Activated naive CD4-positive, alpha-beta T cell treated with anti-CD3 and anti-CD28 coated beads for 36 hours (primary cell): ENCODE measurements at regions of chr3 and their contacts with region 1.

Region 1: GRCh38 chr3:44338010-44338827 is at the start of gene TCAIM:
- DNase-seq: peak; percentile 98
- H3K4me3 Mint-ChIP-seq: peak within 1 kb of the TSS; percentile 99
- H3K27ac Mint-ChIP-seq: peak within 1 kb of the TSS; percentile 98
- H3K4me1 Mint-ChIP-seq: peaks cover 17% of the 10 kb centered on the region
- H3K27me3 Mint-ChIP-seq: no peaks in the 10 kb centered on the region
- total RNA-seq, gene TCAIM: 14.0 to 15.9 TPM

Region 2: DNA sequence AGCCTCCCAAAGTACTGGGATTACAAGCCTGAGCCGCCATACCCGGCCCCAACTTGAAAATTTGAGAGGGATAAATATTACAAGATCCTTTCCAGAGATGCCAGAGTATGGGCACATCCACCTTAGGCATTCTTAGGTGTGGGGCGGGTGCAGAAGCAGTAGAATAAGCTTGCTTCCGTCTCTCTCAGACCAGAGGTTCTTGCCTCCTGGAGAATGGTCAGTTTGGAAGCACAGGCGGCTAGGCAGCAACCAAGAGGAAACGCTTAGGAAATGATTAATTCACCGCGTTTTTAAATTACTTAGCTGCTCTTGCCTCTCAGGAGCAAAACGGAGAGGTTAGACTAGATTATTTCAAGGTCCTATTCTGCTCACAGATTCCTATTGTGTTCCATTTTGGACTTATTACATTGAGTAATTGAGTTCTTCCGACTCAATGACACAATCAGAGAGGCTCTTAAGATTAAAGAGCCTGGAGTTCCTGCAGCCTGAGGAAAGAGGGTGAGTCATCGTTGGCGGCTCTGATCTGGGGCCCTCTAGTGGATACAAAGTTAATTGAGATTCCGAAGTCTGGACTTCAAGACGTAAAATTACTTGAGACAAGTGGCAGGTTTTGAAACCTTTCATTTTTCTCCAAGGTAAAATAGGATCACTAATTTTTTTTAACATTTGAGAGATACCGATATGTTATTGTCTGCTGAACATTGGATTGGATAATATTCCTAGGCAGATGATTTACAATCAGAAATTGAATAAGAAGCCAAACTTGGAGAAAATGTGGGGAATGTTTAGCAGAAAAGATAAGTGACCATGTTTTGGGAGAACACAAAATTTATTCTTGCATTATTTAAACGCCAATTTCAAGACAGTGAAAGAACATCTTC is 102.4 kb before region 1 on chr3:
- CTCF ChIA-PET with region 1: interaction called, 3 read pairs
- intact Hi-C with region 1: loop called (anchors 1 kb)
- DNase-seq: peak; percentile 68
- H3K4me3 Mint-ChIP-seq: no peak overlapping the region
- H3K27ac Mint-ChIP-seq: no peak overlapping the region
- H3K4me1 Mint-ChIP-seq: peaks cover 9% of the 10 kb centered on the region
- H3K27me3 Mint-ChIP-seq: peaks cover 8% of the 10 kb centered on the region

Region 3: DNA sequence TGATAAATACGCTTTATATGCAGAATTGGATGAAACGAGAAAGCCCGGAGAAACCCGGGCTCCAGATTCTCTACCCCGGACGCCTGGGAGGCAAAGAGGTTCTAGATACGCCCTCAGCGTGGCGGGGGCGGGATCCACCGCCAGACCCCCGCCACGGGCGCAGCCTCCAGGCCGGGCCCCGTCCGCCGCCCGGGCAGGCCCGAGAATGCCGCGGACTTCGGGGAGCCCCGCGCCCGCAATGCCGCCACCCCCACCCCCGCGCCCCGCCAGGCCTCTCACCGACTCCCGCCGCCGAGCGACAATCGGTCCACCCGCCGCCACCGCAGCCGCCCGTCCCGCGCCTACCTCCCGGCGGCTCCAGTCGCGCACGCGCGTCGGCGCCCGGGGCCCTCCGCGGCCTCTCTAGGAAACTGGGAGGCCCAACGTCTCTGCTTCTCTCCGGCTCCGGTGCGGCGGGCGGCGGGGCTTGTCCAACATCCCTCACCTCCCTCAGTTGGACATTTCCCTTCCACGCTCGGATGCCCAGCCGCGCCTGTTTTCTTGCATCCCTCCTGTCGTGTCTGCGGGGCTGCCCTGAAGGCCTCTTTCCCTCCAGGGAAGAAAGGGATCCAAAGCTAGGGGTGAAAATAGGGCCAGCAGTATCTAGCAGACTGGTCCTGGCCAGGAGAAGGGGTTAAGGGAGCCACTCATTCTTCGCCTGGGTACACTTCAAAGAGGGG is 139.3 kb after region 1 on chr3 and contains the start of gene ZNF445:
- CTCF ChIA-PET with region 1: no interaction called
- intact Hi-C with region 1: loop called (anchors 1 kb)
- DNase-seq: peak; percentile 79
- H3K4me3 Mint-ChIP-seq: peak within 1 kb of the TSS; percentile 88
- H3K27ac Mint-ChIP-seq: peak within 1 kb of the TSS; percentile 87
- H3K4me1 Mint-ChIP-seq: peaks cover 27% of the 10 kb centered on the region
- H3K27me3 Mint-ChIP-seq: no peaks in the 10 kb centered on the region
- total RNA-seq, gene ZNF445: 19.0 TPM

Region 4: DNA sequence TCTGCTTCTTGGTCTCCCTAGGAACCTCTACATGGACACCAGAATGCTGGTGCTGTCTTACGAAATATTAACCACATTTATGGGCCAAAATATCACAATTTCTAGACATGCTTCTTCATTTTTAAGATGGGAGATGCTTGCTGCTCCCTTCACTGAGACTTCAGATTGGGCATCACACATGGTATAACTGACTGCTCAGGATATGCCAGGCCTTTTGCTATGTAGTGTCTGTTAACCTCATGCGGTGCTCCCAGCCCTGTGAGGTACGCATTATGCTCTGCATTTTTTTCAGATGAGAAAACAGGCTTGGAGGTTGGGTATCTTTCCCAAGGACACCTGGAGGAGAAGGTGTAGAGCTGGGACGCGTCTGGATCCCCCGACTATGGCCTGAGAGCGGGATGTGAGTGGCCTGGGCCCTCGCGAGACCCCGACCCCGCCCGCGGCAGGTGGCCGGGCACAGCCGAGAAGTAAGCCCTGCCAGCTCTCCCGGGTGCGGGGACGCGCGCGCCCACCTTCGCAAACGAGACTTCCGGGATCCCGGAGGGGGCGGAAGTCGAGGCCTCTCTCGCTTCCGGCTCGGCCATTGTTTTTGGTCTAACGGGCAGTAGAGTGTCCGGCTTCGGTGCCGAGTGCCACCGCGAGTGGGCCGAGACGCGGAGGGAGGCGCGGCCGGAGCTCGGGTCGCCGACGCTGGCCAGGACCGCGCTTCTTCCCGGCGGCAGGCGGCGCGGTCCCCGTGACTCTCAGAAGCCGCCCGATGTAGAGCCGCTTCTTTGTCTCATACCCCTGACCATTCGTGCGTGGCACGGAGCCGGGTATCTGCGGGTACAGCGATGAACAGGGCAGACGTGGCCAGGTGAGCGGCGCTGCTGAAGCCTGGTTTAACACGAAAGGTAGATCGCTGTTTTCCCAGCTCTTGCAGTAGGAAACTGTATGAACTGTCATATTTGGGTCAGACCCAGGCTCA is 216.7 kb after region 1 on chr3 and contains the start of gene ZKSCAN7:
- CTCF ChIA-PET with region 1: no interaction called
- intact Hi-C with region 1: loop called (anchors 1 kb)
- DNase-seq: peak; percentile 52
- H3K4me3 Mint-ChIP-seq: peak within 1 kb of the TSS; percentile 82
- H3K27ac Mint-ChIP-seq: peak within 1 kb of the TSS; percentile 1
- H3K4me1 Mint-ChIP-seq: peaks cover 12% of the 10 kb centered on the region
- H3K27me3 Mint-ChIP-seq: peaks cover 6% of the 10 kb centered on the region
- total RNA-seq, gene ZKSCAN7: 1.5 to 1.7 TPM

Region 5: DNA sequence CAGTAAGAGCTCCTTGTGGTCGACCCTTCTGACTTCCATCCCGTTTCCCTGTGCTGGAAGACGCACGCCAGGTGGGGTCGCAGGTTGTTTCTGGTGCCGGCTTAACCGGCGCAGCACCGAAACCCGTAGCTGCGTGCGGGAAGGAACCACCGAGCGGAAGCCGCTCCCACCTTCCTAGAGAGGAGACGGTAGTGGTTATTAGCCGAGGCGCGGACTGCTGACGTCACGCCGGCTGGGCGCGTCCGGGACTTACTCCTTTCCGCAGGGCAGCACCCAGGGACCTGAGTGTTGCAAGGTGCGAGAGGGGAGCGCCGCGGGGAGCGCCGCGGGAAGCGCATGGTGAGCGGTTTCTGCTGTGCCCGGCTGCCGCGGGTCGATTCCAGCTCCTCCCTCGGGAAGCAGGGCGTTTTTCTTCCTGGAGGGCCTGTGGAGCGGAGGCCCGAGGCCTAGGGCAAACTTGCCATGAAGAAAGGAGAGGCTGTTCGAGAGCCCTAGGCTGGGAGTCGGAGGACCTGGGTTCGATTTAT is 391.2 kb after region 1 on chr3 and contains the start of gene ZNF501:
- CTCF ChIA-PET with region 1: no interaction called
- intact Hi-C with region 1: loop called (anchors 1 kb)
- DNase-seq: peak; percentile 94
- H3K4me3 Mint-ChIP-seq: peak within 1 kb of the TSS; percentile 90
- H3K27ac Mint-ChIP-seq: peak within 1 kb of the TSS; percentile 73
- H3K4me1 Mint-ChIP-seq: peaks cover 9% of the 10 kb centered on the region
- H3K27me3 Mint-ChIP-seq: no peaks in the 10 kb centered on the region
- total RNA-seq, gene ZNF501: 1.6 to 2.7 TPM

Region 6: GRCh38 chr3:44861412-44862220 is 523.4 kb after region 1 on chr3 and contains the start of gene TMEM42:
- CTCF ChIA-PET with region 1: no interaction called
- intact Hi-C with region 1: loop called (anchors 5 kb)
- DNase-seq: peak; percentile 86
- H3K4me3 Mint-ChIP-seq: peak within 1 kb of the TSS; percentile 84
- H3K27ac Mint-ChIP-seq: peak within 1 kb of the TSS; percentile 78
- H3K4me1 Mint-ChIP-seq: peaks cover 38% of the 10 kb centered on the region
- H3K27me3 Mint-ChIP-seq: no peaks in the 10 kb centered on the region
- total RNA-seq, gene TMEM42: 13.9 to 15.8 TPM

Region 7: DNA sequence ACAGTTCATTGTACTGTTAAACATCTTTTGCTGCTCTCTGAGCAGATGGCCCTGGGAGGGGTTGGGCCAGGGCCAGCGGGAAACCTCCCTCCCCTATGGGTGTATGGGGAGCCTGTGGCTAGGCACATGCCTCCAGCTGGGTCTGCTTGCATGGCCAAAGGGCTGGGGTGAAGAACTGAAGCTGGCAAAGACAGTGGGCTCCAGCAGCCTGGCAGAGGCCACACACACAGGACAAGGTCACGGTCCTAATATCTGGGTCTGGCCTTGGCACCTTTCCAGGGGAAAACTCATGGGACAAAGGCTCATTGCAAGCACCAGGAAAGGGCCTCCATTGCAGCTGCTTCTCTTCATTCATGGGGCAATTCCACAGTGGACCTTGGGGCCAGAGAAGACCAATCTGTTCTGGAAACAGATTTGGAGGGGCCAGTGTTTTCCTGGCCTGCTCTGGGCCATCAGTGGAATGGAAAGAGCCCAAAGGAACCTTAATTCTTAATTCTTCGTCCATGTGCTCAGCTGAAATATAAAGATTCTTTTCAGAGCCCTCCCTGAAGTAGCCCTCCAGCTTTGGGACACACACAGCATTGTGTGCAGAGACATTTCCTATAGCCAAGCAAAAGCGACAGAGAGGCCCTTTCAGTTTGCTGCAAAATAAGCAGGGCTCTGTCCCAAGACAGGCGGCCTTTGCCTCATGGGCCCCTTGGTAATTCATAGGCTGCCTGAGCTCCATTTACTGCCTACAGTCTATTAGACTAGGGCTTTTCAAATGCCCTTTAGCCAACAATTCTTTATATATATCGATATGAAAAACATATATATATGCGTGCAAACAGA is 1245.0 kb after region 1 on chr3:
- CTCF ChIA-PET with region 1: no interaction called
- intact Hi-C with region 1: no loop called
- DNase-seq: no peak
- H3K4me3 Mint-ChIP-seq: no peak overlapping the region
- H3K27ac Mint-ChIP-seq: no peak overlapping the region
- H3K4me1 Mint-ChIP-seq: no peaks in the 10 kb centered on the region
- H3K27me3 Mint-ChIP-seq: no peaks in the 10 kb centered on the region

Region 8: GRCh38 chr3:46089237-46090011 is 1751.2 kb after region 1 on chr3:
- CTCF ChIA-PET with region 1: no interaction called
- intact Hi-C with region 1: no loop called
- DNase-seq: no peak
- H3K4me3 Mint-ChIP-seq: no peak overlapping the region
- H3K27ac Mint-ChIP-seq: no peak overlapping the region
- H3K4me1 Mint-ChIP-seq: peaks cover 9% of the 10 kb centered on the region
- H3K27me3 Mint-ChIP-seq: peaks cover 30% of the 10 kb centered on the region